ENCODE measurements at regions of chr22 and their contacts with region 1.

Region 1: GRCh38 chr22:35539910-35540594 is 579 bp upstream of the RASD2 start:
- DNase-seq: peak; percentile 22 to 82 (median 48)
- ATAC-seq: peak; percentile 93
- H3K4me3 ChIP-seq: peak overlapping the region; percentile 56
- H3K4me3 Mint-ChIP-seq: peak overlapping the region; percentile 68 to 85 (median 76)
- H3K27ac ChIP-seq: no peak overlapping the region
- H3K27ac Mint-ChIP-seq: peak overlapping the region in 1 of 9 donors; percentile 54
- H3K4me1 ChIP-seq: peaks cover 4 to 5% of the 10 kb centered on the region in 2 donors
- H3K4me1 Mint-ChIP-seq: peaks cover 0 to 14% (median 8%) of the 10 kb centered on the region in 7 donors
- H3K27me3 ChIP-seq: peaks cover 4 to 13% of the 10 kb centered on the region in 2 donors
- H3K27me3 Mint-ChIP-seq: peaks cover 24 to 60% (median 29%) of the 10 kb centered on the region in 5 donors

Region 2: DNA sequence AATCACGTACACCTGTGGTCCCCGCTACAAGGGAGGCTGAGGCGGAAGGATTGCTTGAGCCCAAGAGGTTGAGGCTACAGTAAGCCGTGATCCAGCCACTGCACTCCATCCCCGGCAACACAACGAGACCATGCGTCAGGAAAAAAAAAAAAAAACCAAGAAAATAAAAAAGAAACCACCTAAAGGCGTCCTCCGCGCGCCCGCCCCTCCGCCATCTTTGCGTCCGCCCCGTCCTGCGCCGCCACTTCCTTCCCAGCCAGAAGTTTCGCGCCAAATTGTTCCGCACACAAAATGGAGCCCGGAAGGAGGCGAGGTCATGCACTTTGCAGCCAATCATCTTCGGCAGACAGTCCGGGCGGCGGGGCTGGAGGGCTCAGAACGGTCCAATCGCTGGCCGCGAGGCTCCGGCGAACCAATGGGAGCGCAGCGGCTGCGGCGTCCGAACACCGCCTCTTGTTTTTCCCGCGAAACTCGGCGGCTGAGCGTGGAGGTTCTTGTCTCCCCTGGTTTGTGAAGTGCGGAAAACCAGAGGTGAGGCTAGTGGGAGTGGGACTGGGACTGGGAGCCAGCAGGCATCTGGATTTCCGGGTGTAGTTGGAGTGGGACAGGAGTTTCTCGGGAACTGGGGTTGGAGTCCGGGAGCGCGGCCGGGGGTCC is 140.2 kb before region 1 on chr22 and contains the start of gene MCM5:
- CTCF ChIA-PET with region 1: no interaction called
- POLR2A ChIA-PET with region 1: no interaction called
- intact Hi-C with region 1: loop called in 1 of 2 experiments (anchors 1 kb)
- DNase-seq: peak; percentile 86 to 98 (median 97)
- ATAC-seq: peak; percentile 99
- H3K4me3 ChIP-seq: peak within 1 kb of the TSS; percentile 86
- H3K4me3 Mint-ChIP-seq: peak within 1 kb of the TSS; percentile 94 to 99 (median 99)
- H3K27ac ChIP-seq: peak within 1 kb of the TSS; percentile 80
- H3K27ac Mint-ChIP-seq: peak within 1 kb of the TSS; percentile 90 to 99 (median 96)
- H3K4me1 ChIP-seq: peaks cover 5 to 7% of the 10 kb centered on the region in 2 donors
- H3K4me1 Mint-ChIP-seq: peaks cover 16 to 35% (median 19%) of the 10 kb centered on the region in 7 donors
- H3K27me3 ChIP-seq: no peaks in the 10 kb centered on the region
- H3K27me3 Mint-ChIP-seq: no peaks in the 10 kb centered on the region
- total RNA-seq, gene MCM5: 34.7 to 208 (median 50.7) TPM

Region 3: GRCh38 chr22:35552196-35552842 is 12.3 kb after region 1 on chr22:
- CTCF ChIA-PET with region 1: interaction called, 3 read pairs
- POLR2A ChIA-PET with region 1: interaction called, 3 read pairs
- intact Hi-C with region 1: loop called (anchors 1 kb)
- DNase-seq: peak; percentile 61 to 86 (median 83)
- ATAC-seq: peak; percentile 99
- H3K4me3 ChIP-seq: peak overlapping the region; percentile 48
- H3K4me3 Mint-ChIP-seq: peak overlapping the region; percentile 35 to 72 (median 56)
- H3K27ac ChIP-seq: no peak overlapping the region
- H3K27ac Mint-ChIP-seq: peak overlapping the region in 7 of 9 donors; percentile 5 to 85 (median 40)
- H3K4me1 ChIP-seq: peaks cover 8 to 15% of the 10 kb centered on the region in 2 donors
- H3K4me1 Mint-ChIP-seq: peaks cover 14 to 21% (median 19%) of the 10 kb centered on the region in 7 donors
- H3K27me3 ChIP-seq: no peaks in the 10 kb centered on the region
- H3K27me3 Mint-ChIP-seq: peaks cover 0 to 8% (median 0%) of the 10 kb centered on the region in 5 donors